Posterior vena cava (tissue), 2 donors: ENCODE measurements at regions of chr4 and their contacts with region 1.

Region 1: GRCh38 chr4:64095398-64095797 is 313.9 kb downstream of the TECRL start:
- DNase-seq: no peak

Region 2: DNA sequence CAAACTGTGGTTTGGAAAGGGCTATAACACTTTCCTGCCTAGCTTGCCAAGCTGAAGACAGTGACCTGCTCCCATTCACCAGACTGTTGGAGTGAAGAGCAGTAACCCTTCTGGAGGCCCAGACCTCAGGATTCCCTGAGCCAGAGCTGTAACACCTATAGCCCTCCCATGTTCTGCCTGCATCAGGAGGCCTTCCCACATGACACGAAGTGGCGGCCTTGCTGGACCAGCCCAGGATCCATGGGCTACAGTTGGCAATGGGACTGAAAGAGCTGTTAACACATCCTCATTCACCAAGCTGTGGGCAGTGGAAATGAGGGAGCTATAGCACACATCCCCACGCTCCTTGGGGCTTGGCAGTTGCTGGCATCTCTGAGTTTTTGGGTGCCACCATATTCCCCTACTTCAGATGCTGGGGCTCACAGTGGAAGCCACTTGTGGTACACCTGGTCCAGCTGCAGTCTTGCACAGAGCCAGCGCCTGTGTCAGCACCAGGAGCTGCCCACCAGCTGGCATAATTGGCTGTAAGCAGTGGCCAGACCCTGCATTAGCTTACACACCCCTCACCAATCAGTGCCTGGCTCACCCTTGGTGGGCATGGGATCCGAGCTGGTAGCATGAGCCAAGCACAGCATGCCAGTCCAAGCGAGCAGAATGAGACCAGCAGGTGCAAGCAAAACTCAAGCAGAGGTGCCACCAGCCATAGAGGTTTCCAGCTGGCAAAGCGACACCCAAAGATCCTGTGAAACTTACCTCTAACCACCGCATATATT is 715.5 kb before region 1 on chr4:
- intact Hi-C with region 1: loop called in 1 of 2 experiments (anchors 5 kb)
- DNase-seq: no peak

Region 3: GRCh38 chr4:63787326-63787725 is 308.1 kb before region 1 on chr4:
- intact Hi-C with region 1: no loop called
- DNase-seq: no peak

Region 4: DNA sequence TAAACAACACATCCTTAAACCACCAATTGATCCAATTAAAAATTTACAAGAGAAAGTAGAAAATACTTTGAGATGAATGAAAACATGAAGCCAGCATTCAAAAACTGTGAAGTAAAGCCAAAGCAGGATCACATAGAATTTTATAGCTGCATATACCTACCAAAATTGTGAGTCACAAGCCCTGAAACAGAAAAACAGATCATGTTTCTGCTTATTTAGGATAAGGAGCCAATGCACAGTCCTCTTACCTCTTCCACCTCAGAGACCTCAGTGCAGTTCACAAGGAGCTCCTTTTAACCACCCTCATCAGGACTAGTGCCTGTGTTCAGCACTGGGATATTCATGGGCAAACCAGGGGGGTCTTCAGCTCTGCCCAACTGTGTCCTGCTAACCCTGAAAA is 72.8 kb before region 1 on chr4:
- intact Hi-C with region 1: no loop called
- DNase-seq: no peak